T-cell (primary cell): ENCODE measurements at regions of chr13 and their contacts with region 1.

Region 1: GRCh38 chr13:110161112-110161882 is 145.7 kb downstream of the COL4A1 start:
- DNase-seq: peak in 1 of 35 experiments; percentile 7
- ATAC-seq: no peak
- H3K4me3 ChIP-seq: no peak overlapping the region
- H3K4me3 Mint-ChIP-seq: no peak overlapping the region
- H3K27ac ChIP-seq: no peak overlapping the region
- H3K27ac Mint-ChIP-seq: no peak overlapping the region
- H3K4me1 ChIP-seq: no peaks in the 10 kb centered on the region
- H3K4me1 Mint-ChIP-seq: no peaks in the 10 kb centered on the region
- H3K27me3 ChIP-seq: peaks cover 0 to 9% of the 10 kb centered on the region in 2 experiments
- H3K27me3 Mint-ChIP-seq: peaks cover 5 to 7% of the 10 kb centered on the region in 2 donors

Region 2: GRCh38 chr13:109100705-109101304 is 1060.5 kb before region 1 on chr13:
- CTCF ChIA-PET with region 1: no interaction called
- POLR2A ChIA-PET with region 1: no interaction called
- DNase-seq: no peak
- ATAC-seq: no peak
- H3K4me3 ChIP-seq: no peak overlapping the region
- H3K4me3 Mint-ChIP-seq: no peak overlapping the region
- H3K27ac ChIP-seq: no peak overlapping the region
- H3K27ac Mint-ChIP-seq: no peak overlapping the region
- H3K4me1 ChIP-seq: no peaks in the 10 kb centered on the region
- H3K4me1 Mint-ChIP-seq: no peaks in the 10 kb centered on the region
- H3K27me3 ChIP-seq: peaks cover 0 to 4% of the 10 kb centered on the region in 2 experiments
- H3K27me3 Mint-ChIP-seq: peaks cover 3 to 4% of the 10 kb centered on the region in 2 donors

Region 3: GRCh38 chr13:109537584-109537983 is 623.7 kb before region 1 on chr13:
- CTCF ChIA-PET with region 1: no interaction called
- POLR2A ChIA-PET with region 1: interaction called in 1 of 2 experiments, 10 read pairs
- DNase-seq: no peak
- ATAC-seq: no peak
- H3K4me3 ChIP-seq: no peak overlapping the region
- H3K4me3 Mint-ChIP-seq: no peak overlapping the region
- H3K27ac ChIP-seq: no peak overlapping the region
- H3K27ac Mint-ChIP-seq: no peak overlapping the region
- H3K4me1 ChIP-seq: no peaks in the 10 kb centered on the region
- H3K4me1 Mint-ChIP-seq: no peaks in the 10 kb centered on the region
- H3K27me3 ChIP-seq: peaks cover 0 to 7% of the 10 kb centered on the region in 2 experiments
- H3K27me3 Mint-ChIP-seq: peaks cover 9 to 10% of the 10 kb centered on the region in 2 donors

Region 4: GRCh38 chr13:111384441-111385182 is 1223.3 kb after region 1 on chr13:
- CTCF ChIA-PET with region 1: no interaction called
- POLR2A ChIA-PET with region 1: no interaction called
- DNase-seq: peak in 28 of 35 experiments; percentile 8 to 63 (median 34)
- ATAC-seq: peak; percentile 69 to 77 (median 74)
- H3K4me3 ChIP-seq: peak overlapping the region in 1 of 2 donors; percentile 0
- H3K4me3 Mint-ChIP-seq: peak overlapping the region; percentile 21 to 74 (median 68)
- H3K27ac ChIP-seq: no peak overlapping the region
- H3K27ac Mint-ChIP-seq: peak overlapping the region; percentile 78 to 91
- H3K4me1 ChIP-seq: peaks cover 34 to 39% of the 10 kb centered on the region in 2 experiments
- H3K4me1 Mint-ChIP-seq: peaks cover 35 to 60% (median 42%) of the 10 kb centered on the region in 3 donors
- H3K27me3 ChIP-seq: peaks cover 0 to 37% of the 10 kb centered on the region in 2 experiments
- H3K27me3 Mint-ChIP-seq: peaks cover 0 to 10% of the 10 kb centered on the region in 2 donors